CD4-positive, alpha-beta T cell (primary cell): ENCODE measurements at regions of chr4 and their contacts with region 1.

Region 1: DNA sequence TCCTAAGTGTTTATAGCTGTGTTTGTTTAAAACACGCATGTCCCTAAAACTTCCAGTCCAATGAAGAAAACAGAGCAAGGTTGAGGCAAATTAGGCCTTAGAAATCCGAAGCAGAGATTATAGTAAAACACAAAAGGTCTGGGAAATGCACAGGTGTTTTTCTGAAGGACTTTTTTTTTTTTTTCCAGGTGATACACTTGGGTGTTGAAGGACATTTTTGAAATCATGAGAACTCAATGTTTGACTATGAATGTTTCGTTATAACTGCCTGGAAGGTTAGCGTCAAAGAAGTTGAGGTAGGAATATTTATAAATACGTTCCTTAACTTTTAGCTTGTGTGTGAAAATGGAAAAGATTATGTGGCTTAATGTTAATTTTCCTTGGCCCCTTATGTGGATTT is 45.5 kb downstream of the FHIP1A start:
- DNase-seq: no peak
- ATAC-seq: no peak
- H3K4me3 ChIP-seq: no peak overlapping the region
- H3K4me3 Mint-ChIP-seq: no peak overlapping the region
- H3K27ac ChIP-seq: no peak overlapping the region
- H3K27ac Mint-ChIP-seq: no peak overlapping the region
- H3K4me1 ChIP-seq: no peaks in the 10 kb centered on the region
- H3K4me1 Mint-ChIP-seq: no peaks in the 10 kb centered on the region
- H3K27me3 ChIP-seq: no peaks in the 10 kb centered on the region
- H3K27me3 Mint-ChIP-seq: peaks cover 6% of the 10 kb centered on the region
- CTCF ChIP-seq: no peak

Region 2: GRCh38 chr4:151389311-151389710 is 65.2 kb before region 1 on chr4:
- CTCF ChIA-PET with region 1: no interaction called
- POLR2A ChIA-PET with region 1: no interaction called
- intact Hi-C with region 1: loop called in 1 of 2 experiments (anchors 5 kb)
- DNase-seq: no peak
- ATAC-seq: no peak
- H3K4me3 ChIP-seq: no peak overlapping the region
- H3K4me3 Mint-ChIP-seq: no peak overlapping the region
- H3K27ac ChIP-seq: no peak overlapping the region
- H3K27ac Mint-ChIP-seq: no peak overlapping the region
- H3K4me1 ChIP-seq: no peaks in the 10 kb centered on the region
- H3K4me1 Mint-ChIP-seq: no peaks in the 10 kb centered on the region
- H3K27me3 ChIP-seq: no peaks in the 10 kb centered on the region
- H3K27me3 Mint-ChIP-seq: peaks cover 22% of the 10 kb centered on the region
- CTCF ChIP-seq: no peak

Region 3: GRCh38 chr4:151409470-151410313 is 44.8 kb before region 1 on chr4:
- CTCF ChIA-PET with region 1: no interaction called
- POLR2A ChIA-PET with region 1: no interaction called
- intact Hi-C with region 1: no loop called
- DNase-seq: peak in 6 of 14 experiments; percentile 3 to 44 (median 16)
- ATAC-seq: peak; percentile 1
- H3K4me3 ChIP-seq: peak overlapping the region; percentile 61
- H3K4me3 Mint-ChIP-seq: peak overlapping the region; percentile 92
- H3K27ac ChIP-seq: no peak overlapping the region
- H3K27ac Mint-ChIP-seq: peak overlapping the region; percentile 83
- H3K4me1 ChIP-seq: peaks cover 27% of the 10 kb centered on the region
- H3K4me1 Mint-ChIP-seq: peaks cover 27% of the 10 kb centered on the region
- H3K27me3 ChIP-seq: peaks cover 0 to 4% of the 10 kb centered on the region in 2 experiments
- H3K27me3 Mint-ChIP-seq: peaks cover 8% of the 10 kb centered on the region
- CTCF ChIP-seq: no peak

Region 4: GRCh38 chr4:151599863-151600262 is 145.3 kb after region 1 on chr4:
- CTCF ChIA-PET with region 1: no interaction called
- POLR2A ChIA-PET with region 1: no interaction called
- intact Hi-C with region 1: no loop called
- DNase-seq: no peak
- ATAC-seq: no peak
- H3K4me3 ChIP-seq: no peak overlapping the region
- H3K4me3 Mint-ChIP-seq: no peak overlapping the region
- H3K27ac ChIP-seq: no peak overlapping the region
- H3K27ac Mint-ChIP-seq: no peak overlapping the region
- H3K4me1 ChIP-seq: no peaks in the 10 kb centered on the region
- H3K4me1 Mint-ChIP-seq: no peaks in the 10 kb centered on the region
- H3K27me3 ChIP-seq: no peaks in the 10 kb centered on the region
- H3K27me3 Mint-ChIP-seq: no peaks in the 10 kb centered on the region
- CTCF ChIP-seq: no peak